ENCODE measurements at regions of chr3 and their contacts with region 1.

Region 1: GRCh38 chr3:150850191-150850590 is 55.0 kb downstream of the MINDY4B start:
- DNase-seq: no peak
- CTCF ChIP-seq: no peak

Region 2: DNA sequence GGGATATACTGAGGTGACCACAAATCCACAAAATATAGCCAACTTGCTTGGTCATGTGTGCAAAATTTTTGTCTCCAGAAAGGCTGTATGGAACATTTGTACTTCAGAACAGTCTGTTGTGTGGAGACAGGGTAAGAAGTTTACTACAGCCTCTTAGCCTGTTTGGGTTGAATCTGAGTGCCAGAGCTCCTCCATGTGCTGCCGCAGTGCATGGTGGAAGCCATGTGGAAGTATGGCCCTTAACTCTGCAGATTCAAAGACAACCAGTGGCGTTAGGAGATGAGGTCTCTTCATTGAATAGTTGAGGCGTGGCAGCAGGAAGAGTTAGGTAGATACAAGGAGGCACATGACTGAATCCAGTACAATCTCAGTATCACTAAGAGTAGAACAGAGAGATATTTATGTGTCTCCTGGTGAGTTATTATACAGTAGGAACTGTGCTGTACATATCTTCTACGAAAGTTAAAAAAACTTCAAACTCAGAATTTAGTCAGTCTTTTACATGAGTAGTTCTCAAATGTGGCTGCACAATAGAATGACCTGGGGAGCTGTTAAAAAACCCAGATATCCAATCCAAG is 294.2 kb before region 1 on chr3:
- in situ Hi-C with region 1: no loop called
- DNase-seq: no peak
- CTCF ChIP-seq: no peak

Region 3: DNA sequence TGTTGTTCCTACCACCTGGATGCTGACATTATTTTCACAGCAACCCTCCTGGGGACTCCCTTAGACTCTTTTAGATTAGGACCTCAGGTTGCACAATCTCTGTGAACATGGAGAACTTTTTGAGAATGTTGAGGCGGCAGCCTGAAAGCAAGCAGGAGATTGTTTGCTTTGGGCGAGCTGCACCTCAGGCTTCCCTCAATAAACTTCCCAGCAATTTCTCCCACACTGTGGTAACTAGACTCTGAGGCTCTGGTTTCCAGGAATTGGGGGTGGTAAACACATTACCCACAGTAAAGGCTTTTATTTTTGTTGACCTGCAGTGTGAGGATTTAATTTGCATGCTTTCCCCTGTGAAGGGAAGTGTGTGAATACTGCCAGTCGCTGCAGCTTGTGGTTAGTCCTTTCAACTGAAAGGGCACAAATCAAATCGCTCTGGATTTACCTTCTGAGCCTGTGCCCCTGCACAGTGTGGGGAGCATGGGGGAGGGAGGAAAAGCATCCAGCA is 52.0 kb before region 1 on chr3:
- in situ Hi-C with region 1: loop called (anchors 10 kb)
- DNase-seq: no peak
- CTCF ChIP-seq: no peak

Region 4: GRCh38 chr3:150960708-150961684 is 110.8 kb after region 1 on chr3:
- in situ Hi-C with region 1: no loop called
- DNase-seq: no peak
- CTCF ChIP-seq: no peak

Region 5: GRCh38 chr3:151086484-151087456 is 236.6 kb after region 1 on chr3:
- in situ Hi-C with region 1: no loop called
- DNase-seq: peak; percentile 88
- CTCF ChIP-seq: peak; percentile 42